H1 (cell line): ENCODE measurements at regions of chr9 and their contacts with region 1.

Region 1: GRCh38 chr9:132901856-132902831 is 23.4 kb downstream of the SPACA9 start:
- DNase-seq: peak; percentile 54 to 89
- H3K4me3 ChIP-seq: no peak overlapping the region
- H3K27ac ChIP-seq: no peak overlapping the region
- H3K4me1 ChIP-seq: peaks cover 7 to 23% (median 16%) of the 10 kb centered on the region in 4 experiments; a peak in 6 of 7 replicates
- H3K27me3 ChIP-seq: no peaks in the 10 kb centered on the region
- CTCF ChIP-seq: peak; percentile 71 to 97 (median 91)
- EP300 ChIP-seq: no peak
- POLR2A ChIP-seq: no peak
- RAD21 ChIP-seq: peak; percentile 78 to 85

Region 2: GRCh38 chr9:132806723-132807421 is 95.3 kb before region 1 on chr9:
- CTCF ChIA-PET with region 1: interaction called, 52 read pairs
- POLR2A ChIA-PET with region 1: no interaction called
- DNase-seq: peak; percentile 47 to 56
- H3K4me3 ChIP-seq: no peak overlapping the region
- H3K27ac ChIP-seq: no peak overlapping the region
- H3K4me1 ChIP-seq: peaks cover 2 to 15% (median 6%) of the 10 kb centered on the region in 4 experiments; a peak in 6 of 7 replicates
- H3K27me3 ChIP-seq: no peaks in the 10 kb centered on the region
- CTCF ChIP-seq: no peak
- EP300 ChIP-seq: no peak
- POLR2A ChIP-seq: no peak
- RAD21 ChIP-seq: no peak

Region 3: DNA sequence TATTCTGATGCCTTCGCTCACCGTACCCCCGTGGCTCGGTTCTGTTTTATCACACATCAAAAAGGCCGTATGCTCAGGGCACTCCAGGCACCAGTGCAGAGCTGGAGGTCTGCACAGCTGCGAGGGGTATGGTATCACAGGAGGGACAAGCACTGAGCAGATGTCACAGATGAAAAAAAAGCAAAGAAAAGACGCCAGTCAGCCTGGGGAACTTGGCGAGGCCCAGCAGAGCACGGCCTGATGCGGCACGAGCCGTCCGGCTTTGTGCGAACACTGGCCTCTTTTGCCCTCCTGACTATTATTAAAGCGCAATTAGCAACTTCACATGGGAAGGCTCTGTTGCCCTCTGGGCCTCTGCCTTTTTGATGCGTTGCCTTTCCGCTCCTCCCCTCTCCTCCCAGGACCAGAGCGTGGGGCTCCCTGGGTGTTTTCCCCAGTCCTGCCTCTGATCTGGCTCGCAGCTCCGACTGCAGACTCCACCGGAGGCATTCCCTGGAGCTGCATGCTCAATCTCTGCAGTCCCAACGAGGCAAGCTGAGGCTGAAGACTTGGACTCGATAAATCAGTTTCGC is 68.5 kb before region 1 on chr9:
- CTCF ChIA-PET with region 1: interaction called, 14 read pairs
- POLR2A ChIA-PET with region 1: no interaction called
- DNase-seq: no peak
- H3K4me3 ChIP-seq: no peak overlapping the region
- H3K27ac ChIP-seq: no peak overlapping the region
- H3K4me1 ChIP-seq: no peaks in the 10 kb centered on the region
- H3K27me3 ChIP-seq: no peaks in the 10 kb centered on the region
- CTCF ChIP-seq: no peak
- EP300 ChIP-seq: no peak
- POLR2A ChIP-seq: no peak
- RAD21 ChIP-seq: no peak

Region 4: GRCh38 chr9:132877824-132878694 is 24.1 kb before region 1 on chr9 and contains the start of gene AK8:
- CTCF ChIA-PET with region 1: interaction called, 115 read pairs
- POLR2A ChIA-PET with region 1: no interaction called
- DNase-seq: peak in 1 of 2 experiments; percentile 90
- H3K4me3 ChIP-seq: peak within 1 kb of the TSS; percentile 69 to 97 (median 88)
- H3K27ac ChIP-seq: no peak within 1 kb of the TSS
- H3K4me1 ChIP-seq: peaks cover 0 to 6% (median 0%) of the 10 kb centered on the region in 4 experiments; a peak in 1 of 7 replicates
- H3K27me3 ChIP-seq: peaks cover 0 to 14% (median 9%) of the 10 kb centered on the region in 4 experiments; a peak in 6 of 7 replicates
- CTCF ChIP-seq: no peak
- EP300 ChIP-seq: 0 out of 3 replicates have a peak, but pooled peaks of 1 of the 2 experiments have one; percentile 17
- POLR2A ChIP-seq: no peak
- RAD21 ChIP-seq: no peak; a peak in 1 of 4 replicates
- total RNA-seq, gene AK8: 0.48 and 0.52 TPM in 2 replicates

Region 5: DNA sequence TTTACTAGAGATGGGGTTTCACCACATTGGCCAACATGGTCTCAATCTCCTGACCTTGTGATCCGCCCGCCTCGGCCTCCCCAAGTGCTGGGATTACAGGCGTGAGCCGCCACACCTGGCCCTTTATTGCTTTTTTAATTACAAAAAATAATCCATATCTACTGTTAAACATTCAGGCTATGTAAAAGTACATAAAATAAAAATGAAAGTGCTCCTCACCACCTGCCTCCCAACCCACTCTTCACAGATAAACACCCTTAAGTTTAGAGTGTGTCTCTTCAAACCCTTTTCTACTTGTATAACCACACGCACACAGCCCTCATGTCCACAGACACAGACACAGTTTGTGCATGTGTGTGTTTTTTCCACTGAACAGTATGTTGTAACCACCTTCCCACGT is 25.6 kb after region 1 on chr9:
- CTCF ChIA-PET with region 1: interaction called, 24 read pairs
- POLR2A ChIA-PET with region 1: no interaction called
- DNase-seq: no peak
- H3K4me3 ChIP-seq: no peak overlapping the region
- H3K27ac ChIP-seq: no peak overlapping the region
- H3K4me1 ChIP-seq: no peaks in the 10 kb centered on the region
- H3K27me3 ChIP-seq: no peaks in the 10 kb centered on the region
- CTCF ChIP-seq: no peak
- EP300 ChIP-seq: no peak
- POLR2A ChIP-seq: no peak
- RAD21 ChIP-seq: no peak

Region 6: DNA sequence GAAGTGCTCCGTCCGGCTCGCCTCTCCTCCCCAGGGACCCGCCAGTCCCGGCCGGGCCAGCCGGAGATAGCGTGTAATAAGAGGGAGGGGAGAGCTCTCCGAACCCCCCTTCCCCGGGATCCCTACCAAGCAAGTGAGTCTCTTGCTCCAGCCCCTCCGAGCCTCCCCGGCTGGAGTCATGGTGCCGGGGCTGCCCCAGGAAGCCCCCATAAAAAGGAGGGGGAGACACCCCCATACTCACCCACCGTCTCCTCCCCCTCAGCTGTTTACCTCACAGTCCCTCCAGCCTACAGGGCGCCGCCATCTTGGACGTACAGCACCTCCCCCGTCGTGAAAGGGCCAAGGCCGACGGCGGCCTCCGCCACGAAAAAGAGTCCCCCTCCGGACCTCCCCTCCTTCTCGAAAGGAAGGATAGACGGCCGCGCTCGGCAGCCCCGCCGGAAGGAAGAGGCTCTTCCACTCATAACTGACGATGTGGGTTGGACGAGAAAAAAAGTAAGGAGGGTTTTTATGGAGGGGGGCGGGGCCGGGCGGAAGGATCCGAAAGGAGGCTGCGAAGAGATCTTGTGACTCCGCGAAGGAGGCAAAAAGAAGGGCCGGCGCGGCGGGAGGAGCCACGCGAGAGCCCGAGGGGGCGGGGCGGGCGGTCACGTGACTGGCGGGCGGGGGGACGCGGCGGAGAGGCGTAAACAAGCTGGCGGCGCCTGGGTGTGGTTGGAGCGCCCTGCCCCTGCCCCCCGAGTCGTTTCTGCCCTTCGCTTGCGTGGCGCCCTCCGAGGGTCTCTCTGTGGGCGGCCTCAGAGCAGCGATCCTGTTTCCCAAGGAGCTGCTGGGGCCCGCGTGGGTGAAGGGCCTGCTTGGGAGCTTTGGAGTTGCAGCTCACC is 42.4 kb after region 1 on chr9 and contains the start of gene TSC1:
- CTCF ChIA-PET with region 1: interaction called, 14 read pairs
- POLR2A ChIA-PET with region 1: no interaction called
- DNase-seq: peak; percentile 75 to 97
- H3K4me3 ChIP-seq: peak within 1 kb of the TSS; percentile 91 to 95 (median 92)
- H3K27ac ChIP-seq: peak within 1 kb of the TSS; percentile 100
- H3K4me1 ChIP-seq: peaks cover 4 to 13% (median 9%) of the 10 kb centered on the region in 4 experiments
- H3K27me3 ChIP-seq: no peaks in the 10 kb centered on the region
- CTCF ChIP-seq: no peak
- EP300 ChIP-seq: 0 out of 3 replicates have a peak, but pooled peaks of 1 of the 2 experiments have one; percentile 10
- POLR2A ChIP-seq: peak; percentile 75 to 80
- RAD21 ChIP-seq: no peak
- total RNA-seq, gene TSC1: 39.1 and 46.0 TPM in 2 replicates

Region 7: DNA sequence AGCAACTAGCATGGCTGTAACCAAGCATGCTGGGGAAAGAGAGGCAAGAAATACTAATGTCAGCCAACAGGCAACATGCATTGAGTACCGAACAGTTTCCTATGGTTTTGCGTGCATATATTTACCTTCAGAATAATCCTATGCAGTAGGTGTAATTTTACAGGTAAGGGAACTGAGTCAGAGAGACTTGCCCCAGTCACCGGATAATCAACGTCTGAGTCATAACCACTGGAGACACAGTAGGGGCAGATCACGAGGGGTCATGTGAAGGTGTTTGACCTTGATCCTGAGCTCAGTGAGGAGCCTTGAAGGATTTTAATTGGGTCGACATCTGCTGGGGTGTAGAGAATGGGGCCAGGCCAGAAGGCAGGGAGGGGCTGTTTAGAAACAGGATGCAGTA is 55.7 kb after region 1 on chr9:
- CTCF ChIA-PET with region 1: no interaction called
- POLR2A ChIA-PET with region 1: no interaction called
- DNase-seq: no peak
- H3K4me3 ChIP-seq: no peak overlapping the region
- H3K27ac ChIP-seq: no peak overlapping the region
- H3K4me1 ChIP-seq: no peaks in the 10 kb centered on the region
- H3K27me3 ChIP-seq: no peaks in the 10 kb centered on the region
- CTCF ChIP-seq: no peak
- EP300 ChIP-seq: no peak
- POLR2A ChIP-seq: no peak
- RAD21 ChIP-seq: no peak

Region 8: GRCh38 chr9:133048569-133048968 is 146.4 kb after region 1 on chr9:
- CTCF ChIA-PET with region 1: no interaction called
- POLR2A ChIA-PET with region 1: no interaction called
- DNase-seq: no peak
- H3K4me3 ChIP-seq: no peak overlapping the region
- H3K27ac ChIP-seq: no peak overlapping the region
- H3K4me1 ChIP-seq: no peaks in the 10 kb centered on the region
- H3K27me3 ChIP-seq: no peaks in the 10 kb centered on the region
- CTCF ChIP-seq: peak; percentile 38 to 59 (median 55)
- EP300 ChIP-seq: no peak
- POLR2A ChIP-seq: no peak
- RAD21 ChIP-seq: peak; percentile 44 to 65